Right lobe of liver (tissue), 6 donors: ENCODE measurements at regions of chr17 and their contacts with region 1.

Region 1: DNA sequence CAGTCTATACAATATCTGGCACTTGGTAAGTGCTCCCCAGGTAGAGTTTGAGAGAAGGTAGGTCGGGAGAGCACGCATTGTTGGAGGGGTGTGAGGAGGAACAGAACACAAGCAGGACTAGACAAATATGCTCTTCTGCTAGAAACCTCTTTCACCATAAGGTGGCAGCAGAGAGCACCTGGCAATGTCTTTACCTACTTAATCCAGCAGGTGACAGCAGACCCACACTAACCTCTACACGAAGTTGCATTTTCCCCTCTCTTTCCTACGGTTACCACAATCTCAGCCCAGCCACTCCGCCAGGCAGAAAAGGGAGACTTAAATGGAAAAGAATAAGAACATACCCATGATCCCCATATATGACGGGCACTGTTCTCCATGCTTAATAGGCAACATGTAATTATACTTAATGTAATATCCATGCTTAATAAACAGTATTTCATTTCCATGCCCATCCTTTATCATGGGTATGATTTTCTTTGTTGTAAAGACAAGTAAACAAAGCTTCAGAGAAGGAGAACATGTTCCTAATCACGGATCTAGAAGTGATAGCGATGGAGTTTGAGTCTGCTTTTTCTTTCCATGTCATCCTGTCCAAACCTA is 55.1 kb upstream of the CCL2 start:
- DNase-seq: peak in 2 of 3 donors; percentile 42 to 79
- ATAC-seq: peak; percentile 97 to 99 (median 98)
- H3K4me3 ChIP-seq: no peak overlapping the region
- H3K27ac ChIP-seq: no peak overlapping the region
- H3K4me1 ChIP-seq: peaks cover 0 to 3% (median 0%) of the 10 kb centered on the region in 4 donors
- H3K27me3 ChIP-seq: peaks cover 0 to 4% of the 10 kb centered on the region in 2 donors
- CTCF ChIP-seq: peak in 3 of 4 donors; percentile 100
- POLR2A ChIP-seq: no peak

Region 2: DNA sequence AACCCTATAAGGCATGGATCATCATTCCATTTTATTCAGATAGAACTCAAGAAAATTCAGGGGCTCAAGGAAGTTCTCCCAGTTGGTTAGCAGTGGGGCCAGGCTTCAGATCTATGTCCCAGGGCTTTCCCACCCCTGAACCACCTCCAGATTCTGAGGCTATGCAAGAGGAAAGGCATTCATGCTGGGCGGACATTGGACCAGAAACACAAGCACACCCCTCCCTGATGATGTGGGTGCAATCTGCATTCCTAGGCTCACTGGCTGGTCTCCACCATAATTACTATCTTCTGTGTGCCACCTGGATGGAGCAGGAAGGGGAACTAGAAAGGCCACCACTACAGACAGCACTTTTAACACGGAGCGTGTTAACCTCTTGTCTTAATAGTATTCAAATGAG is 843.8 kb before region 1 on chr17:
- intact Hi-C with region 1: no loop called
- DNase-seq: no peak
- ATAC-seq: no peak
- H3K4me3 ChIP-seq: no peak overlapping the region
- H3K27ac ChIP-seq: no peak overlapping the region
- H3K4me1 ChIP-seq: no peaks in the 10 kb centered on the region
- H3K27me3 ChIP-seq: no peaks in the 10 kb centered on the region
- CTCF ChIP-seq: no peak
- POLR2A ChIP-seq: no peak

Region 3: DNA sequence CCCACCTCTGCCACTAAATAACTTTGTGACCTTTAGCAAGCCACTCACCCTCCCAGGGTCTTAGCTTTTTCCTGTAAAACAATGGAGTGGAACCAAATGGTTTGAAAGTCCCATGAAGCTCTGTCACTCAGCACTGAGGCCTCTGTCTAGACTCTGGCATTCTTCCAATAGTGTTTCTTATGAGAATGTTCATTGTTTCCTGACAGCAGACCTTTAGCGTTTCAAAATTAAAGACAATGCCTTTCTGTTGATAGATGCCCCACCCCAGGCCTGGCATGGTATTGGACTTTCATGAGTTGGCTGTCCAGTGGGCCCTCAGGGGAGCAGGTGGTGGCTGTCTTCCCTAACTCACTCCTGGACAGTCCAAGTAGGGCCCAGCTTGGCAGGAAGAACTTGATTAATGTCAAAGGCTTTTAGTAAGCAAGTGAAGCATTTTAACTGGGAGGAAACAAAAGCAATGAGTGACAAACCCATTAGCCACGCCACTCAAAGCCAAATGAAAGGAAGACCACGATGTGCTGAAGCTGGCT is 131.5 kb before region 1 on chr17:
- intact Hi-C with region 1: no loop called
- DNase-seq: no peak
- ATAC-seq: no peak
- H3K4me3 ChIP-seq: no peak overlapping the region
- H3K27ac ChIP-seq: no peak overlapping the region
- H3K4me1 ChIP-seq: no peaks in the 10 kb centered on the region
- H3K27me3 ChIP-seq: no peaks in the 10 kb centered on the region
- CTCF ChIP-seq: no peak
- POLR2A ChIP-seq: no peak

Region 4: GRCh38 chr17:34285286-34285792 is 85.3 kb after region 1 on chr17 and contains the start of gene CCL11:
- intact Hi-C with region 1: no loop called
- DNase-seq: no peak
- ATAC-seq: no peak
- H3K4me3 ChIP-seq: no peak within 1 kb of the TSS
- H3K27ac ChIP-seq: no peak within 1 kb of the TSS
- H3K4me1 ChIP-seq: no peaks in the 10 kb centered on the region
- H3K27me3 ChIP-seq: no peaks in the 10 kb centered on the region
- CTCF ChIP-seq: no peak
- POLR2A ChIP-seq: no peak
- total RNA-seq, gene CCL11: 0.55 TPM in 1 of 6 experiments, not detected in the others

Region 5: GRCh38 chr17:34306466-34306865 is 106.4 kb after region 1 on chr17:
- intact Hi-C with region 1: loop called in 1 of 2 experiments (anchors 10 kb)
- DNase-seq: no peak
- ATAC-seq: peak; percentile 32 to 79 (median 45)
- H3K4me3 ChIP-seq: no peak overlapping the region
- H3K27ac ChIP-seq: no peak overlapping the region
- H3K4me1 ChIP-seq: no peaks in the 10 kb centered on the region
- H3K27me3 ChIP-seq: no peaks in the 10 kb centered on the region
- CTCF ChIP-seq: peak; percentile 21 to 40 (median 32)
- POLR2A ChIP-seq: no peak

Region 6: DNA sequence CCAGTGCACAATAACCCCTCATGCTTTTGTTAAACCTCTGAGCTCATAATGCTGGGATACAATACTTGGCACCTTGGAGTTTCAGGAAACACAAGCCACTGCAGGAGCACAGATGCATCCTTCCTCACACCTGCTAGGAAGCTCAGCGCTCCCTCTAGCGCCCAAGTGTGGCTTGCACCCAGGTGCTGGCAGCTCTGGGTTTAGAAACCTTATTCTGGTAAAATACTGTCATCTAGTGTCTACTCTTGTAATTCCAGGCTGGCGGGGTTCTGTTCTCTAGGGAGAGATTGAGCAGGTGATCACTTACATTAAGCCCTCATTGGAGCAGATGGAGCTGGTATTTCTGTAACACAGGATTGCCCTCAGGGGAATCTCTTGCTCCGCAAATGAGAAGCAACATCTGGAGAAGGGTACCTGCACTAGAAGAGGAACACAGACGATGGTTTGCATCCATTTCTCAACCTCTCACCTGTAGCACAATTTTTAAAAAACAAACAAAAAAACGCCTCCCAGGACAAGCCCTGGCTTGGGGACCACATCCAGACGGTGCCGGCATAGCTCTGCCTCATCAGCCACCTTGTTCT is 161.5 kb after region 1 on chr17:
- intact Hi-C with region 1: loop called (anchors 5 to 10 kb)
- DNase-seq: peak; percentile 89
- ATAC-seq: peak; percentile 97 to 99 (median 98)
- H3K4me3 ChIP-seq: no peak overlapping the region
- H3K27ac ChIP-seq: no peak overlapping the region
- H3K4me1 ChIP-seq: no peaks in the 10 kb centered on the region
- H3K27me3 ChIP-seq: no peaks in the 10 kb centered on the region
- CTCF ChIP-seq: peak; percentile 99 to 100 (median 100)
- POLR2A ChIP-seq: no peak